A673 (cell line): ENCODE measurements at regions of chr12 and their contacts with region 1.

Region 1: GRCh38 chr12:41264281-41264680 is 76.2 kb downstream of the PDZRN4 start:
- DNase-seq: no peak
- H3K4me3 ChIP-seq: no peak overlapping the region
- H3K27ac ChIP-seq: no peak overlapping the region
- H3K4me1 ChIP-seq: no peaks in the 10 kb centered on the region
- H3K27me3 ChIP-seq: no peaks in the 10 kb centered on the region
- CTCF ChIP-seq: peak; percentile 57

Region 2: DNA sequence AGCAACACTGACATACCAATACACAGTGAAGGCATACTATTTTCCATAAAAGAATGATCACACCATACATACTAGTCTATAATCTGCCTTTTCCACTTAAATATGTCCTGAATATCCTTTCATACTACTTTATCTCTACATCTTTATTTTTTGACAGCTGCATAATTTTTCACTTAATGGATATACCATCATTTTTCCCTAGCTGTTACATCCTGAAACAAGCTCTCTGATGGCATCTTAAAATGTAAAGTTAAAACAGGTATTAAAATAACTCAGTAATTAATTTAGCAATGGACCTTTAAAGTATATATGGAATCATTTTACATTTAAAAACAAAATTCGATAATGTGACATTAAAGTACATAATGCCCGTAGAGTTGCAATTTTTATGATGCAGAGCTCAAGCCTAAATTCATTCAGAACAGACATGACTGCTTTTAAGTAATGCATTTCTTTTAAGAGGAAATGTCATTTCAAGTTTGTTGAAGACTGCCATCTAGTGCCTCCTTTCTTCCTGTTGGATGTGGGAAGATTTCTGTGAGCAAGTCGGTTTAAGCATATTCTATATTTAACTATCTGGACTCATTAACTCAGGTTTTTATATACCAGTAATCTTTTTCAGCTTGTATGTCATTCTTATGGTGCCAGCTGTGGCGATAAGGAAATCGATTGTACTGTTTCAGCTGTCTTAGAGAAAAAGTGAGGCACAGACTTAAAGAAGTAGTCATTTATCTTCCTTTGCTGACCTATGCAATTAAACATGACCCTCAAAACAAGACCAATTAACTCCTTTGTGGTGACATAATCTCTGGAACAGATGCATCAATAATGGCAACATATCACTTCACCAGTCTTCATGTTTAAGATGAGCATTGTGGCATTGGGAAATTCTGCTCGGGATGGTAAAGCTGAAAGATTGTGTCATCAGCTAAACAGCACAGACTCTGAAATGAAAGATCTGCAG is 1305.0 kb after region 1 on chr12:
- CTCF ChIA-PET with region 1: no interaction called
- POLR2A ChIA-PET with region 1: no interaction called
- intact Hi-C with region 1: loop called (anchors 10 kb)
- DNase-seq: peak; percentile 74
- H3K4me3 ChIP-seq: no peak overlapping the region
- H3K27ac ChIP-seq: no peak overlapping the region
- H3K4me1 ChIP-seq: no peaks in the 10 kb centered on the region
- H3K27me3 ChIP-seq: no peaks in the 10 kb centered on the region
- CTCF ChIP-seq: peak; percentile 71